PC-9 (cell line): ENCODE measurements at regions of chr15 and their contacts with region 1.

Region 1: GRCh38 chr15:83287541-83288027 is 3.1 kb upstream of the BNC1 start:
- DNase-seq: peak; percentile 61 to 86
- H3K4me3 ChIP-seq: peak overlapping the region; percentile 43; the same call in 1 of the 2 replicates
- H3K27ac ChIP-seq: peak overlapping the region; percentile 98
- H3K4me1 ChIP-seq: peaks cover 71% of the 10 kb centered on the region
- H3K27me3 ChIP-seq: no peaks in the 10 kb centered on the region
- CTCF ChIP-seq: no peak

Region 2: GRCh38 chr15:83066734-83067637 is 220.6 kb before region 1 on chr15 and contains the start of gene BTBD1:
- CTCF ChIA-PET with region 1: no interaction called
- POLR2A ChIA-PET with region 1: no interaction called
- intact Hi-C with region 1: loop called (anchors 5 kb)
- DNase-seq: peak; percentile 86 to 93
- H3K4me3 ChIP-seq: peak within 1 kb of the TSS; percentile 95
- H3K27ac ChIP-seq: peak within 1 kb of the TSS; percentile 72
- H3K4me1 ChIP-seq: peaks cover 27% of the 10 kb centered on the region
- H3K27me3 ChIP-seq: no peaks in the 10 kb centered on the region
- CTCF ChIP-seq: no peak; the same call in 1 of the 2 replicates
- total RNA-seq, gene BTBD1: 24.7 and 28.2 TPM in 2 replicates

Region 3: DNA sequence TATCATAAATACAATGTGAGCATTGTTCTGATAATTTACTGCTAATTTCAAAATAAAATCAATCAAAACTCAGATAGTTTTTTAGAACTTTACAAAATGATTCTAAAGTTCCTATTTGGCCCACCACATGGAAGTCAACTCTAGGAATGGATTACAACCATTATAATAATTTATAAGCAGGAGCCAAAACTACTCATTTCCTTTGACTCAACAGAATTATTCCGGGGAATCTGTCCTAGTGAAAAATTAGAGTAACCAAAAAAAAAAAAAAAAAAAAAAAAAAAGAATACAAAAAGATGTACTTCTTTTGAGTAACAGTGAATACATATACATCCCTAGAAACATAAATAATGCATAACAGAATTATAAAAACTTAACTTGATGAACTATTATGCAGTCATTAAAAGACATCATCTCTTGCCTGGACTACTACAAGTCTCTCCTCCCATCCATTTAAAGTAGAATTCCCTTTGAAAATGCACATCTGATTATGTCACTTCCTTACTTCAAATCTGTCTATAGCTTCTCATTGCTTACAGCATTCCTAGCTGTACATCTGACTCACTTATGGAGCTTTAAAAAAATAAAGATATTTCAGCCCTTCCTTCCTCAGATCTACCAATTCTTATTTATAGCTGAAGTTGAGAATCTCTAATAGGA is 123.3 kb before region 1 on chr15:
- CTCF ChIA-PET with region 1: no interaction called
- POLR2A ChIA-PET with region 1: no interaction called
- intact Hi-C with region 1: no loop called
- DNase-seq: no peak
- H3K4me3 ChIP-seq: no peak overlapping the region
- H3K27ac ChIP-seq: no peak overlapping the region
- H3K4me1 ChIP-seq: 0 out of 2 replicates have a peak, but pooled peaks cover 5% of the 10 kb centered on the region
- H3K27me3 ChIP-seq: no peaks in the 10 kb centered on the region
- CTCF ChIP-seq: no peak

Region 4: DNA sequence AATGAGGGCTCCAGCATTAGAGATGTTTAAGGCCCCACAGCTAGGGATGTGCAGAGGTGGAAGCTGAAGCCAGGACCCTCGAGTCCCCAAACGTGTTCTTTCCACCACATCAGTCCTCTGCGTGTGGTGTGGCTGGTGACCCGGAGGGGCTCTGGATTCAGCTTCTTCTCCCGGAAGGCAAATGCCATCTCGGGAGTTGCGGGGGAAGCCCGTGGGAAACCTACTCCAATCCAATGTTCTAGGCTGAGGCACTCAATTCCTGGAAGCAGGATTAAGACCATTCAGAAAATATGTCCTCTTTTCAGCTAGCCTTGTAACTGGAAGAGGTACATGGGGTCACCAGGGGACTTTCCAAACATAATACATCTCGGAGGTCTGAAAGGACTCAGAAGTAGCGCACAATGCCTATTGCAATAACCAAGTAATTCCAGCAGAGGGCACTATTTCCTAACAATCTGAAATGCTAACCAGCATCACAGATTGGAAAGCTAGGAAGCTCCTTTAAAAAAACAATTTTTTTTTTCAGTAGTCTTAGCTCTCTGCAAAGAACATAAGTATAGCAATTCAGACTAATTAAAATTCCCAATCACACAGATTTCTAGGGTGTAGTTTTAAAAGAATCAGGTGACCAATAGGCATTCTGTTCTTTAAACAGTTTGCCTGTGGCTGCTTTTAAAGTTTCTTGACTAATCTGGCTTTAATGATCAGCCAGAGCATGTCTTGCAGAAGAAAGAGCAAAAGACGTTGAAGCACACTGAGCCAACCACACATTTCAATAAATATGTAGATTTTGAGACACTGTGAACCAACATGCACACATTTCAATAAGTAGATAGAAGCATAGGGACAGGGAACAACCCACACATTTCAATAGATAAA is 39.2 kb before region 1 on chr15:
- CTCF ChIA-PET with region 1: interaction called, 4 read pairs
- POLR2A ChIA-PET with region 1: interaction called, 4 read pairs
- intact Hi-C with region 1: loop called (anchors 1 kb)
- DNase-seq: peak; percentile 34 to 55
- H3K4me3 ChIP-seq: no peak overlapping the region
- H3K27ac ChIP-seq: peak overlapping the region; percentile 7; the same call in 1 of the 2 replicates
- H3K4me1 ChIP-seq: peaks cover 17% of the 10 kb centered on the region
- H3K27me3 ChIP-seq: no peaks in the 10 kb centered on the region
- CTCF ChIP-seq: peak; percentile 98

Region 5: DNA sequence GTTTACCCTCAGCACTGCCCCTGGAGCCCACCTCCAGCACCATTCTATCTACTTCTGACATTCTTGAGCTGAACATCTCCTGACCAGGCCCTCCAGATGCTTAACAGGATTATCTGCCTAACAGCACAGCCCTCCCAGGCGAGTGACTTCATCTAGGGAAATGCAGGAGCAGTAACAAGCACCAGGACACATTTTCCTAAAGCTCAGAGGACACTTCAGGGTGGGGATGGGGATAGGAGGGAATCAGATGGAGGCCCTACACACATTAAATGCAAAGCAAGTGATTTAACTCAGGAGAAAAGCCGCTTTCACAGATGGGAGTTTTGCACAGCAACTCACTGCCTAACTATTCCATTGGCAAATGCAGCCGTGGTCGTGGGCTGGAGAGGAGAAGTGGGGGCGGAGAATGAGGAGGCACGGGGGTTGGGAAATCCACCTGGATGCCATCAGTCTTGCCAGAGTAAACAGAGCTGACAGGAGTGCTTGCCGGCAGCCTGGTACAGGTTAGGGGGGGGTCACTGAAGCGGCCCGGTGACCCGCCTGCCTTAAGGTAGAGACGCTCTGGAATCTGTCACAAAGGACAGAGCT is 18.2 kb after region 1 on chr15:
- CTCF ChIA-PET with region 1: no interaction called
- POLR2A ChIA-PET with region 1: interaction called, 5 read pairs
- intact Hi-C with region 1: loop called (anchors 1 kb)
- DNase-seq: peak; percentile 81 to 89
- H3K4me3 ChIP-seq: peak overlapping the region; percentile 41; the same call in 1 of the 2 replicates
- H3K27ac ChIP-seq: peak overlapping the region; percentile 98
- H3K4me1 ChIP-seq: peaks cover 63% of the 10 kb centered on the region
- H3K27me3 ChIP-seq: no peaks in the 10 kb centered on the region
- CTCF ChIP-seq: no peak

Region 6: GRCh38 chr15:83365370-83365938 is 77.9 kb after region 1 on chr15:
- CTCF ChIA-PET with region 1: no interaction called
- POLR2A ChIA-PET with region 1: interaction called, 24 read pairs
- intact Hi-C with region 1: no loop called
- DNase-seq: peak in 1 of 2 experiments; percentile 21
- H3K4me3 ChIP-seq: peak overlapping the region; percentile 52
- H3K27ac ChIP-seq: no peak overlapping the region
- H3K4me1 ChIP-seq: peaks cover 20% of the 10 kb centered on the region; the same call in 1 of the 2 replicates
- H3K27me3 ChIP-seq: no peaks in the 10 kb centered on the region
- CTCF ChIP-seq: no peak

Region 7: DNA sequence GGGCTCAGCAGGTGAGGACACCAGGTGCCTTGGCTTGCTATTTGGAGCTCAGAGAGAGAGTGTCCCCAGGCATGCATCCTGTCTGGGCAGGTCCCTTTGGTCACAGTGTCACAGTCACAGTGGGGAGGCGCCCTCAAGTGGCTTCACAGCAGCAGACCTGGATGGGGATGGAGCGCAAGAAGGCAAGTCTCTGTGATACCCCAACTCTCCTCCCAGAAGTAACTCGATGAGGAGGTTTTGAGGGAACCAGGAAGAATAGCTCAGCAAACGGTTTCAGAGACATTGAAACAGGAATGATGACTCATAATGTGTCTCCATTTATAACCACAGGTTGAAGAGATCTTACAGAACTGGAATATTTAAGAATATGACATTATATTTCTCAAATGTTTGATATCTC is 93.1 kb after region 1 on chr15:
- CTCF ChIA-PET with region 1: interaction called, 4 read pairs
- POLR2A ChIA-PET with region 1: interaction called, 8 read pairs
- intact Hi-C with region 1: loop called (anchors 1 kb)
- DNase-seq: peak; percentile 82 to 88
- H3K4me3 ChIP-seq: no peak overlapping the region
- H3K27ac ChIP-seq: peak overlapping the region; percentile 95
- H3K4me1 ChIP-seq: peaks cover 53% of the 10 kb centered on the region
- H3K27me3 ChIP-seq: no peaks in the 10 kb centered on the region
- CTCF ChIP-seq: peak; percentile 73

Region 8: DNA sequence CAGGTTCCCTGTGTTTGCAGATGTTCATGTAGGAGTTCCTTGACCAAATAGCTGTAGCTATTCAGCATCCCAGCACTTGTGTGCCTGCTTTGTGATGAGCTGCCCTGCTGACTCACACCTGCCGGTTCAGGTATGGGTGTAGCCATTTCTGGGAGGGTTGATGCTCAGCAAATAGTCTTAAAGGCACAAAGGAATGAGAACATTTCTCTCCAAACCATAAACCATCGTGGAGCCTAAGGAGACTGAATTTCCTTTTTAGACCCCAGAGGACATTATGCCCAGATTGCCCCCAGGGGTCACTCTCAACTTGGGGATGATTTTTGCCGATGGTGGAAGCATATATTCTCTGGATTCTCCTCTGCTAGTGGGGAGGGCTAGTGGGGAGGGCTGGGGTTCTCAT is 446.9 kb after region 1 on chr15:
- CTCF ChIA-PET with region 1: no interaction called
- POLR2A ChIA-PET with region 1: no interaction called
- intact Hi-C with region 1: loop called (anchors 1 kb)
- DNase-seq: peak; percentile 67 to 73
- H3K4me3 ChIP-seq: no peak overlapping the region
- H3K27ac ChIP-seq: peak overlapping the region; percentile 95
- H3K4me1 ChIP-seq: peaks cover 33% of the 10 kb centered on the region
- H3K27me3 ChIP-seq: no peaks in the 10 kb centered on the region
- CTCF ChIP-seq: no peak; the same call in 1 of the 2 replicates